ENCODE measurements at regions of chr5 and their contacts with region 1.

Region 1: GRCh38 chr5:144131261-144131660 is 39.2 kb downstream of the YIPF5 start:
- DNase-seq: no peak
- ATAC-seq: no peak
- H3K4me3 Mint-ChIP-seq: no peak overlapping the region
- H3K27ac Mint-ChIP-seq: no peak overlapping the region
- H3K4me1 Mint-ChIP-seq: no peaks in the 10 kb centered on the region
- H3K27me3 Mint-ChIP-seq: no peaks in the 10 kb centered on the region
- CTCF ChIP-seq: no peak

Region 2: DNA sequence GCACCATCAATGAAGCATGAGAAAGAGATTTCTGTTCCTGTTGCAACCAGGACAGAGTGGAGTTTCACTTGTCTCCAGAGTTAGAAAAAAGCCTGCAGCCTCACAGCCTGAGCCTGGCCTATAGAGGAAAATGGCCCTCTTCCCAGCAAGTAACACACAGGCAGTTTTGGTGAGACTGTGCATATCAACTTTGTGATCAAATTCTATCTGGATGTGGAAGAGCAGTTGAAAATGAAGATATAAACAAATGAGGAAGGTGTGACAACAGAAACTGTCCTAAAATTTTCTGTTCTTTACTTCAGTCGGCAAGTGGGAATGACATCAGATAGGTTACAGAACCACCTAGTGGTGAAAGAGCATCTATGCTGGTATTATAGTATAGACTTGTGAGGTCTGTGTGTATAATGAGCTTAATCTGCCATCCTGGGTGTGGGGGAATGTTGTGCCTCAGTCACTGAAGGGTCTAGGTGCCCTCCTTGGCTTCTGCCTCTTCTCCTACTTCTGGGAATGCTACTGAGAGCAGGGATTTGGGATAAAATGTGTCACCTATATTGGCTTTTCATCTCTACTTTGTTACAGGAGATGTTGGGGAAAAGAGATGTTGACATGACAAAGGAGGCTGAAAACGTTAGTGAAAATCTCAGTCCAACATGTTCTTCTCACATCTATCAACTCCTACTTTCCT is 11.0 kb after region 1 on chr5:
- CTCF ChIA-PET with region 1: interaction called, 19 read pairs
- POLR2A ChIA-PET with region 1: no interaction called
- intact Hi-C with region 1: no loop called
- DNase-seq: no peak
- ATAC-seq: peak; percentile 87
- H3K4me3 Mint-ChIP-seq: no peak overlapping the region
- H3K27ac Mint-ChIP-seq: no peak overlapping the region
- H3K4me1 Mint-ChIP-seq: peaks cover 2% of the 10 kb centered on the region
- H3K27me3 Mint-ChIP-seq: peaks cover 7% of the 10 kb centered on the region
- CTCF ChIP-seq: peak; percentile 52